Activated T-helper 2 cell treated with anti-CD3 and anti-CD28 coated beads, Interferon-gamma antibody, Interleukin-2, Interleukin-4, amounts not matched to agents 10 μg/mL and 5 μg/mL and 100 μg/mL, durations not matched to agents 14 hours and 24 hours and 36 hours (primary cell): ENCODE measurements at regions of chrX and their contacts with region 1.

Region 1: GRCh38 chrX:40013266-40014195 is 84.2 kb downstream of the BCOR start:
- DNase-seq: peak; percentile 41
- H3K4me3 Mint-ChIP-seq: peak overlapping the region; percentile 73
- H3K27ac Mint-ChIP-seq: peak overlapping the region; percentile 87
- H3K4me1 Mint-ChIP-seq: peaks cover 18% of the 10 kb centered on the region
- H3K27me3 Mint-ChIP-seq: peaks cover 11% of the 10 kb centered on the region

Region 2: DNA sequence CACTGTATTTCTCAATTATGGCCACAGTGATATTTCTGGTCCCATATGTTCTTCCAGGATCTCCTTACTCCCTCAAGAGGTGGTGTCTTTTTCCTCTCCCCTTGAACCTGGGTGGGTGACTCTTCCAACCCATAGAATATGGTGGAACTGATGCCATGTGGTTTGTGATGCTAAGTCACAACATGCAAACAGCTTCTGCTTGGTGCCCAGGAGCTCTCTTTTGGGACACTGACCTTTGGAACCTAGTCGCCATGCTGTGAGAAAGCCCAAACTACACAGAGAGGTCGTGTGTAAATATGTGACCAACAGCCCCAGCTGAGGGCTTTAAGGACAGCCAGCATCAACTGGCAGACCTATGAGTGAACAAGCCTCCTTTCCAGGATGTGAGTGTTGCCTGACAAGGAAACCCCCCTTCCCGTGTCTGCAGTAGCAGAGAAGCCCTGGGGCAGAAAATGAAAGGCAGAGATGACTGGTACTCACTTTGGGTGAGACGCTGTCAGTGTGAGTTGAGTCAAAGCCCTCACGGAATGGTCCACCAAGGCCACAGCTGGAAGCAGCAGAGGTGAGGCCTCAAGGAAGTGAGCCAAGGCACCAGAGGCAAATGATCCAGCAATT is 139.2 kb before region 1 on chrX:
- intact Hi-C with region 1: loop called (anchors 5 kb)
- DNase-seq: peak; percentile 64
- H3K4me3 Mint-ChIP-seq: peak overlapping the region; percentile 7
- H3K27ac Mint-ChIP-seq: peak overlapping the region; percentile 89
- H3K4me1 Mint-ChIP-seq: peaks cover 31% of the 10 kb centered on the region
- H3K27me3 Mint-ChIP-seq: no peaks in the 10 kb centered on the region

Region 3: DNA sequence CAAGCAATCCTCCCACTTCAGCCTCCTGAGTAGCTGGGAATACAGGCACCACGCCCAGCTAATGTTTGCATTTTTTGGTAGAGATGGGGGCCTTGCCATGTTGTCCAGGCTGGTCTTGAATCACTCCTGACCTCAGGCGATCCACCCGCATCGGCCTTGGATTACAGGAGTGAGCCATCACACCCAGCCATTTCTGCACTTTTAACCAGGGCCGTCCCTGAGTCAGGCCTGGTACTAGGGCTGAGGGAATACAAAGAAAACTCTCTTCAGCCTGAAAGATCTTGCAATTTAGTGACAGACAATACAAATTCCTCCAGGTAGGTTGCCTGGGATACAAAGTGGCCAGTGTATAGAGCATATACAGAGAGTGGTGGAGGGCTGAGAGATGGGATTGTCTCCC is 18.4 kb after region 1 on chrX:
- intact Hi-C with region 1: no loop called
- DNase-seq: no peak
- H3K4me3 Mint-ChIP-seq: no peak overlapping the region
- H3K27ac Mint-ChIP-seq: no peak overlapping the region
- H3K4me1 Mint-ChIP-seq: peaks cover 2% of the 10 kb centered on the region
- H3K27me3 Mint-ChIP-seq: no peaks in the 10 kb centered on the region

Region 4: DNA sequence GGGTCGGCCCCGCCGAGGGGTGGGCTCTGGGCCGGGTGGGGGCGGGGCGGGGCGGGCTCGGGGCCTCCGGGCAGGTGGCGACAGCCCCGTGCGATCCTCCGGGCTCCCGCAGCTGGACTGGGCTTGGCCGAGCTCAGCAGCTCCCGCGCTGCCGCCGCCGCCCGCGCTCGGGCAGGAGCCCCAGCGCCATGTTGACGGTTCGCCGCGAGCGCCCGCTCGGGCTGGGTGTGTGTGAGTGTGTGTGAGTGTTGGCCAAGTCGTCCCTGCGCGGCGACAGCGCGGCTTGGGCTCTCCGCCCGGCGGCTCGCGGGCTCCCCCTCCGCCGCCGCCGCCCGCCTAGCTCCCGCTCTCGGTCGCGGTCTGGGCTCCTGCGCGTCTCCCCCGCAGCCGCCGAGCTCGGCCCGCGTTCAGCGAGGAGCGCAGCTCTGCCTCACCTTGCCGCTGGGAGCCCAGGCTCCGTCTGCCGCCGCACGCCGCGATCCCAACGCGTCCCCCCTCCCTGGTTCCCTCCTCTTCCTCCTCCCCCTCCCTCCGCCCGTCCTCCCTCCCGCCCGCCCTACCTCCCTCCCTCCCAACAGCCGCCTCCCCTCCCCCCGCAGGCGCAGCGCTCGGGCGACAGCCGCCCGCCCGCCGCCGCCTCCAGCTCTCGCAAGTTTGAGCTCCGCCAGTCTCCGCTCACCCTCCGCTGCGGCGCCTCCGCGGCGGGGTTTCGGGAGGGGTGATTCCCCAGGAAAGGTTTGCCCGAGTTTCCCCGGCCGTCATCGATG is 84.1 kb after region 1 on chrX and contains the start of gene BCOR:
- intact Hi-C with region 1: loop called (anchors 2 kb)
- DNase-seq: peak; percentile 71
- H3K4me3 Mint-ChIP-seq: peak within 1 kb of the TSS; percentile 90
- H3K27ac Mint-ChIP-seq: peak within 1 kb of the TSS; percentile 95
- H3K4me1 Mint-ChIP-seq: peaks cover 28% of the 10 kb centered on the region
- H3K27me3 Mint-ChIP-seq: no peaks in the 10 kb centered on the region
- total RNA-seq, gene BCOR: 74.6 and 82.2 TPM in 2 replicates

Region 5: DNA sequence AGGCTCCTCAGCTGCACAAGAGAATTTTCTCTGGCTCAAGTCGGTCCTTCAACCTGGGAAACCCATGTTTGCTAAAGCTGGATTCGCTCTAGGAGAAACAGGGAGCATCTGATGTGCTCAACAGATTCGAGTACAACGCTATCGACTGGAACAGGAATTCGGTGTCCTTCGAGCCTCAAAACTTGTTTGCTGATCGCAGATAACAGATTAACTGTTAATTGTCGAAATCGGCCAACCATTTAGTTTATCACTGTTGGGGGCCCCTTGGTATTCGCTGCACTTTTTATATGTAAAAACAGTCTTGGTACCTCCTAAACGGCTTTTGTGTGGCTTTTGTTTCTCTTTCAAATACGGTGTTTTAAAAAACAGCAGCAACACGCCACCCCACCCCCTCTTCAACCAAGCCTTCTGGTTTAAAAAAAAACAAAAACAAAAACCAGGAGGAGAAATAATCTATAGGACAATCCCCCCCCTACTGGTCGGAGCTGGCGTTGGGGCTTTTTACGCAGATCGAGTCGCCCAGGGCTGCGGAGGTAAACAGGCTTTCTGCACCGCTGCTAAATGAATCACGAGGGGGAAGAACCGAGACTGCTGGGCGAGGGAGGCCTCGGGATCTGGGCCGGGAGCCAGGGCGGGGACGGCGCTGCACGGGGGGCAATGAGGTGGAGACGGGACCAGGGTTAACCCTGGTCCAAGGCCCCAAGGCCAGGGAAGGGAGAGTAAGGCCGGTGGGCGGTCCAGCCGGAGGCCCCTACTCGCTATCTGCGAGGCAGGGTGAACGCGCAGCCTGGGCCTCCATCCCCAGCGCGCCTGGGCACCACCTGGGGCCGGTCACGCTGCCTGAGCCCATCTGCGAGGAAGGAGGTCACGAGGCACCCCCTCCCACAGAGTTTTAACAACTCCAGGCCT is 155.9 kb after region 1 on chrX:
- intact Hi-C with region 1: loop called (anchors 5 kb)
- DNase-seq: peak; percentile 80
- H3K4me3 Mint-ChIP-seq: peak overlapping the region; percentile 81
- H3K27ac Mint-ChIP-seq: peak overlapping the region; percentile 94
- H3K4me1 Mint-ChIP-seq: peaks cover 37% of the 10 kb centered on the region
- H3K27me3 Mint-ChIP-seq: no peaks in the 10 kb centered on the region

Region 6: GRCh38 chrX:40262157-40263013 is 248.9 kb after region 1 on chrX:
- intact Hi-C with region 1: no loop called
- DNase-seq: no peak
- H3K4me3 Mint-ChIP-seq: no peak overlapping the region
- H3K27ac Mint-ChIP-seq: no peak overlapping the region
- H3K4me1 Mint-ChIP-seq: peaks cover 4% of the 10 kb centered on the region
- H3K27me3 Mint-ChIP-seq: peaks cover 1% of the 10 kb centered on the region